AG04449 (cell line): ENCODE measurements at regions of chr5 and their contacts with region 1.

Region 1: DNA sequence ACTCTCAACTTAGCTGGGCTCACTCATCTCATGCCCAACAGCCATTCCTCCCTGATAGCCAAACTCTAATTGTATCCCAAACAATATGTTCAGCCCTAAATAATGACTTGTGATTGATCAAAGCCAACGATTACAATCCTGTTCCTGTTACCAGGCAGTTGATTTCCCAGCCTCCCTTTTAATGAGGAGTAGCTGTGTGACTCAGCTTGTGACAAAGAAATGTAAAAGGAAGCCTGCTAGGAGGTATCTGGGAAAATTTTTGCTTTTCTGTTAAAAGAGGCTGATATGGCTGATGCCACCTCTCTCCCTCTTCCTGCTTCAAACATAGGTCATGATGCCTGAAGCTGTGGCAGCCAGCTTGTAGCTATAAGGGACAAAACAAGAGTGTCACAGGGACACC is 19.6 kb upstream of the ENC1 start:
- DNase-seq: no peak
- H3K4me3 ChIP-seq: no peak overlapping the region
- CTCF ChIP-seq: no peak

Region 2: GRCh38 chr5:73902327-73903051 is 757.7 kb before region 1 on chr5:
- CTCF ChIA-PET with region 1: interaction called, 11 read pairs
- POLR2A ChIA-PET with region 1: no interaction called
- DNase-seq: peak; percentile 28
- H3K4me3 ChIP-seq: no peak overlapping the region
- CTCF ChIP-seq: peak; percentile 45